Heart left ventricle (tissue), 16 donors: ENCODE measurements at regions of chr17 and their contacts with region 1.

Region 1: GRCh38 chr17:57662644-57663308 is 82.3 kb downstream of the CCDC182 start:
- DNase-seq: peak; percentile 95 to 99 (median 97)
- ATAC-seq: peak; percentile 97 to 98 (median 98)
- H3K4me3 ChIP-seq: peak overlapping the region in 10 of 12 donors; percentile 18 to 50 (median 38)
- H3K27ac ChIP-seq: peak overlapping the region; percentile 20 to 93 (median 84)
- H3K4me1 ChIP-seq: peaks cover 2 to 47% (median 23%) of the 10 kb centered on the region in 12 donors
- H3K27me3 ChIP-seq: no peaks in the 10 kb centered on the region
- CTCF ChIP-seq: peak in 4 of 12 donors; percentile 5 to 30 (median 11)
- POLR2A ChIP-seq: peak in 1 of 2 donors; percentile 55

Region 2: DNA sequence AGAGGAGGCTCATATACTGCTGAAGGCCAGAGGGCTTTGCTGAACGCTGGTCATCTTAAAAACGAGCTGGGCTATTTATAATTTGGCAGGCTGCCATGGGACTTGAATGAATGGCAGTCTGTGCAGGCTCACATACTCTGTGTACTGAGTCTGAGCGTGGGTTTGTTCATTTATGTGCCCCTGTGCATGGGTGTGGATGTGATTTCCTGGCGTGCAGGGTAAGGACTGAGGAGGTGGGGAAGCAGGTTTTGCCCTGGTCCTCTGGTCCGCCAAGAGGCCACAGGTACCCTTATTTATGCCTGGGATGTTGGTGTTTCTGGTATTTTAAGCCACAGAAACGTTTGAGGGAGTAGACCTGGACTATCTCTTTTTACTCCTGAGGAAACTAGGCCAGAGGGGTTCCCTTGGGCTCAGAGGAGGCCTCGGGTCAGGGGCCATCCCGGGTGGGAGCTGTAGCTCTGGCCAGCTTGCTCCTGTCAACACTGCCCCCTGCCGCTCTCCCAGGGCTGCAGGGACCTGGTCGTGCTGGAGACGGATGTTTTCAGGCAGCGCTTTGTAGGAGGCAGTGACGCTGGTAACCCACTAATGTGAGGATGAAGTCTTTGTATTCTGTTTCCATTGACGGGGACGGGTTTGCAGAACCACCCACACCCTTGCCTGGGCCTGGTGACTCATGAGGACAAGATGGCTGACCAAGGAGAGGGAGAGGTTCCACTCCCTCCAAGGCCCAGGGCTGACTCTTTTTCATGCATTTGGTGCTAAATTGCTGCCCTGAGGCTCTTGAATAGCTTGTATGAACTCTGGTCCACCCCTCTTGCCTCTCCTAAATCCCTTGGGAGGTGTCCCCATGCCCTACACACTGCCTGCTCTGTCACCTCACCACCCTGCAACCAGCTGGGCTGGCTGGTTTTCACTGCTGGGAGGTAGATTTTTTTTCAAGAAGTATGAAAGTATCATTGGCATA is 222.0 kb before region 1 on chr17:
- intact Hi-C with region 1: loop called in 2 of 10 experiments (anchors 10 kb)
- DNase-seq: peak; percentile 76 to 88 (median 78)
- ATAC-seq: peak; percentile 74 to 86 (median 84)
- H3K4me3 ChIP-seq: peak overlapping the region in 1 of 12 donors; percentile 7
- H3K27ac ChIP-seq: peak overlapping the region; percentile 11 to 87 (median 69)
- H3K4me1 ChIP-seq: peaks cover 4 to 91% (median 57%) of the 10 kb centered on the region in 12 donors
- H3K27me3 ChIP-seq: no peaks in the 10 kb centered on the region
- CTCF ChIP-seq: peak; percentile 16 to 80 (median 56)
- POLR2A ChIP-seq: no peak

Region 3: GRCh38 chr17:57463103-57463851 is 199.5 kb before region 1 on chr17:
- intact Hi-C with region 1: loop called in 1 of 10 experiments (anchors 10 kb)
- DNase-seq: no peak
- ATAC-seq: peak in 2 of 4 donors; percentile 13 to 30
- H3K4me3 ChIP-seq: no peak overlapping the region
- H3K27ac ChIP-seq: no peak overlapping the region
- H3K4me1 ChIP-seq: peaks cover 0 to 71% (median 18%) of the 10 kb centered on the region in 12 donors
- H3K27me3 ChIP-seq: no peaks in the 10 kb centered on the region
- CTCF ChIP-seq: no peak
- POLR2A ChIP-seq: no peak

Region 4: DNA sequence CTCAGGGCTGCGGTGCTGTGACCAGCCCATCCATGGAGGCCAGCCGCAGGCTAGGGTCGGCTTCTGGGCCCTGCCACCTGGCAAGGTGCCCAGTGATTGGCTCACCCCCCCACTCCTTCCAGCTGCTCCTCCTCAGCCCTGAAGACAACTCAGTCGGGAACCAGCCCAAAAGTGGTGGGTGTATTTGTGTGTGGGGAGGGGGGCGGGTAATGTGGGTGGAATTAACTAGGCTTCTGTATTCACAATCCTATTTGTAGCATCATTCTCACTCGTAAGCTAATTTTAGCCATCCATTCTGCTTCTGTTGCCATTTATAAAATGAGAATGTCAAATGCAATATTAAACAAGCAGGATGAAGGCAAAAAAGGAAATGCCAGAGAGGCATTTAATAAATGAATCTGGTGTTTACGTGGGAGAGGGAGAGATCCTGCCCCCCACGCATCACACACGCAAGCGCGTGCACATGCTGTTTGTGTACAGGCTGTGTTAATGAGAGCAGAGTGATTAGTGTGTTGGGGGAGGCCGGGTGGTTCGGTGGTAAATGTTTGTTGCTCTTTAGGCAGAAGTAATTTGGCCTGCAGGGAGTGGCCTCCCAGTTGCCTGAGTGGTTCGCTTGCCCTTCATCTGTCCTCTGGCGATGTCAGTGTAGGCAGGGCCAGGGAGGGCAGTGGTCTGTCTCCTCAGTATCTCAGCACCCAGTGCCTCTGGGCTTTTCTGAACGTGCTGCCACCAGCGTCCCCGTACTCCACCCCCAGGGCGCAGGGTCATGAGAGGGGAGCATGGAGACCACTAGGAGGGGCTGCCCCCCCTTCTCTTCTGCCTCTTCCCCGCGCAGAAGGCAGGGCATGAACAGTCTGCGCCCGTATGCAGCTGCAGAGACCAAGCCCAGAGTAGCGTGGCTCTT is 57.8 kb before region 1 on chr17:
- intact Hi-C with region 1: loop called in 2 of 10 experiments (anchors 5 kb)
- DNase-seq: peak in 4 of 5 donors; percentile 57 to 77 (median 63)
- ATAC-seq: peak; percentile 76 to 79 (median 79)
- H3K4me3 ChIP-seq: peak overlapping the region in 8 of 12 donors; percentile 2 to 29 (median 18)
- H3K27ac ChIP-seq: peak overlapping the region; percentile 66 to 95 (median 88)
- H3K4me1 ChIP-seq: peaks cover 3 to 65% (median 37%) of the 10 kb centered on the region in 12 donors
- H3K27me3 ChIP-seq: no peaks in the 10 kb centered on the region
- CTCF ChIP-seq: peak in 2 of 12 donors; percentile 3 to 17
- POLR2A ChIP-seq: no peak

Region 5: DNA sequence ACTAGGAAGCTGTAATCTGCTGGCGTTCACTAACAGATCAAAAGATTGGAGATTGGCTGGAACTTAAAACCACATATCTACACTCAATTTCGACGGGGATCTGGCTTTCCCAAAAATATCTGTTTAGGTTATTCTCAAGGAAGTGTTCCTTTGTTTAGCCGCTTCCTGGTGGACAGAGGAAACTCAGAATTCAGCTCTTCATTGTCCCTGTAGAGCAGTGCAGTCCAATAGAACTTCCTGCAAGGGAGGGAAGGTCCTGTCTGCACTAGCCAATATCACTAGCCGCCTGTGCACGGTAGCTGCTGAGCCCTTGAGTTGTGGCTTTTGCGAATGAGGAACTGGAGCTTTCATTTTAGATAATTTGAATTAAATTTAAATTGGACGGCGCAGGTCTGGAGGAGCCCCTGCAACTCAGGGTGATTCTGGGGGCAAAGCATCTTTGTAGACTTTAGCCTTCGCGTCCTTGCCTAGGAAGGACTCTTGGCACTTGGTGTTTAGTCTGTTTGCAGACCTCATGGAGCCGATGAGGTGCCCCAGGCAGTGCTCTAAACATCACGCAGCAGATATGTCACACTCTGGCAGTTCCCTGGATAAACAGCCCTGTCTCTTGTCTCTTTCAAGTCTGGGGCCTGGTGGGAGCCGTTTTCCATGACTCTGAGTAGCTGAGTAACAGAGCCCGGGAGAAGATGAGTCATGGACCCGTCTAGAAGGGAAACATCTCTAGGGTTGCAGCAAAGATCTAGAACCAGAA is 39.9 kb before region 1 on chr17:
- intact Hi-C with region 1: loop called in 3 of 10 experiments (anchors 2 to 5 kb)
- DNase-seq: peak in 3 of 5 donors; percentile 40 to 74 (median 48)
- ATAC-seq: peak; percentile 41 to 84 (median 80)
- H3K4me3 ChIP-seq: no peak overlapping the region
- H3K27ac ChIP-seq: peak overlapping the region in 11 of 12 donors; percentile 43 to 79 (median 67)
- H3K4me1 ChIP-seq: peaks cover 0 to 58% (median 19%) of the 10 kb centered on the region in 12 donors
- H3K27me3 ChIP-seq: no peaks in the 10 kb centered on the region
- CTCF ChIP-seq: no peak
- POLR2A ChIP-seq: no peak

Region 6: GRCh38 chr17:57747221-57748017 is 84.6 kb after region 1 on chr17:
- intact Hi-C with region 1: no loop called
- DNase-seq: no peak
- ATAC-seq: peak; percentile 37 to 62 (median 44)
- H3K4me3 ChIP-seq: no peak overlapping the region
- H3K27ac ChIP-seq: no peak overlapping the region
- H3K4me1 ChIP-seq: peaks cover 0 to 7% (median 0%) of the 10 kb centered on the region in 12 donors
- H3K27me3 ChIP-seq: peaks cover 0 to 3% (median 0%) of the 10 kb centered on the region in 9 donors
- CTCF ChIP-seq: peak; percentile 51 to 83 (median 74)
- POLR2A ChIP-seq: no peak